ENCODE measurements at regions of chr15 and their contacts with region 1.

Region 1: GRCh38 chr15:36883713-36884517 is 216.4 kb downstream of the MEIS2 start:
- DNase-seq: peak; percentile 95
- ATAC-seq: peak; percentile 94

Region 2: DNA sequence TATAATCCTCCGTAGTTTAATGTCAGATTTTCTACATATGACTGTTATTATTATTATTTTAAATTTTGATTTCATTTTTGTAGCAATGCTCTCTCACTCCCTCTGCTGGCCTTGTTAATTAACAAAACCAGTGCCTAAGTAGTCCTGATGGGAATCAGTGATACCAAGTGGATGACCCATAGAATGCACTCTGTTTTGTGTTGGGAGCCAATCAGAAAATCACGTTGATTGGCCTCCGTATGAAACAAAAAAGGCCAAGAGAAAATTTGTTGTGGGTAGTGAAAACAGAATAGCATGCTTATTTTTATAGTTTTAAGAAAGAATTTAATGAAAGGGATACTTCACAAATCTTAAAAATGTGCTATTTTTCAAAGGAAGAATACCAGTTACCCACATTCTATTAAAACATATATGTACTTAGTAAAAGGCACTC is 250.8 kb after region 1 on chr15:
- intact Hi-C with region 1: loop called (anchors 10 kb)
- DNase-seq: no peak
- ATAC-seq: peak; percentile 68

Region 3: DNA sequence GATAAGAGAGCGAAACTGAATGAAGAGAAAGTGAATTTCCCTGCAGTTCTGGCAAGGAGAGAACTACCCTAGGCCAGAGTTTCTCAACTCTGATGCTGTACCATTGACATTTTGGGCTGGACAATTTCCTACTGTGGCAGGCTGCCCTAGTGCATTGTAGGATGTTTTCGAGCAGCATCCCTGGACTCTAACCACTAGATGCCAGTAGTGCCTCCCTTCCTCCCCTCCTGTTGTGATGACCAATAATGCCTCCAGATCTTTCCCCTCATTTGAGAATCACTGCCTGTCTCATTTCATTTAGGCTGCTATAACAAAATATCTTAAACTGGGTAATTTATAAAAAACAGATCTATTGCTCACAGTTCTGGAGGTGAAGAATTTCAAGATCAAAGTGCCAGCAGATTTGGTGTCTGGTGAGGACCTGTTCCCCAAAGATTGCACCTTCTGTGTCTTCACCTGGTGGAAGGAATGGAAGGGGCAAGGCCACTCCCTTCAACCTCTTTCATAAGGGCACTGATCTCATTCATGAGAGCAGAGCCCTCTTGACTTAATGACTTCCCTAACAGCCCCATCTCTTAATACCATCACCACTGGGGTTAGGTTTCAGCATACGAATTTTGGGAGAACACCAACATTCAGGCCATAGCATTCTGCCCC is 405.3 kb after region 1 on chr15:
- intact Hi-C with region 1: no loop called
- DNase-seq: no peak
- ATAC-seq: no peak

Measured in sciatic nerve (tissue), 2 donors.